ENCODE measurements at regions of chr2 and their contacts with region 1.

Region 1: GRCh38 chr2:24261441-24261840 is 86.6 kb downstream of the FAM228A start:
- DNase-seq: no peak
- H3K4me3 Mint-ChIP-seq: no peak overlapping the region
- H3K27ac Mint-ChIP-seq: no peak overlapping the region
- H3K4me1 Mint-ChIP-seq: peaks cover 18% of the 10 kb centered on the region
- H3K27me3 Mint-ChIP-seq: no peaks in the 10 kb centered on the region

Region 2: DNA sequence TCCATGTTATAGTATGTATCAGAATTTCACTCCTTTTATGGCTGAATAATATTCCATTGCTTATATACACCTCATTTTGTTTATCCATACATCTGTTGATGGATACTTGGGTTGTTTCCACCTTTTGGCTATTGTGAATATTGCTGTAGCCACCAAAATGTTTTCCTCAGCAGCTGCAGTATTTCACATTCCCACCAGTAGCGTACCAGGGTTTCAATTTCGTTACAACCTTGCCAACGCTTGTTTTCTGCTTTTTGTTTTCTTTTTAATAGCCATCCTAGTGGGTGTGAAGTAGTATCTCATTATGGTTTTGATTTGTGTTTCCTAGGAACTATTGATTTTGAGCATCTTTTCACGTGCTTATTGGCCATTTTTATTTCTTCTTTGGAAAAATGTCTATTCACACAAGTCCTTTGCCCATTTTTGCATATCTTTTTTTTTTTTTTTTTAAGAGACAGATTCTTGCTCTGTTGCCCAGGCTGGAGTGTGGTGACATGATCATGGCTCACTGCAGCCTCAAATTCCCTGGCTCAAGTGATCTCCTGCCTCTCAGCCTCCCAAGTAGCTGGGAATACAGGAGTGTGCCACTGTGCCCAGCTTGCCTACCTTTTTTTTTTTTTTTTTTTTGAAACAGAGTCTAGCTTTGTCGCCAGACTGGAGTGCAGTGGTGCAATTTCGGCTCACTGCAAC is 307.0 kb before region 1 on chr2:
- intact Hi-C with region 1: no loop called
- DNase-seq: no peak
- H3K4me3 Mint-ChIP-seq: no peak overlapping the region
- H3K27ac Mint-ChIP-seq: no peak overlapping the region
- H3K4me1 Mint-ChIP-seq: peaks cover 3% of the 10 kb centered on the region
- H3K27me3 Mint-ChIP-seq: no peaks in the 10 kb centered on the region

Region 3: GRCh38 chr2:24191848-24192247 is 69.6 kb before region 1 on chr2:
- intact Hi-C with region 1: no loop called
- DNase-seq: no peak
- H3K4me3 Mint-ChIP-seq: no peak overlapping the region
- H3K27ac Mint-ChIP-seq: no peak overlapping the region
- H3K4me1 Mint-ChIP-seq: no peaks in the 10 kb centered on the region
- H3K27me3 Mint-ChIP-seq: peaks cover 14% of the 10 kb centered on the region

Region 4: GRCh38 chr2:24287171-24287570 is 25.7 kb after region 1 on chr2:
- intact Hi-C with region 1: loop called (anchors 1 kb)
- DNase-seq: no peak
- H3K4me3 Mint-ChIP-seq: no peak overlapping the region
- H3K27ac Mint-ChIP-seq: no peak overlapping the region
- H3K4me1 Mint-ChIP-seq: peaks cover 25% of the 10 kb centered on the region
- H3K27me3 Mint-ChIP-seq: no peaks in the 10 kb centered on the region